Endothelial cell of umbilical vein (primary cell): ENCODE measurements at regions of chr3 and their contacts with region 1.

Region 1: DNA sequence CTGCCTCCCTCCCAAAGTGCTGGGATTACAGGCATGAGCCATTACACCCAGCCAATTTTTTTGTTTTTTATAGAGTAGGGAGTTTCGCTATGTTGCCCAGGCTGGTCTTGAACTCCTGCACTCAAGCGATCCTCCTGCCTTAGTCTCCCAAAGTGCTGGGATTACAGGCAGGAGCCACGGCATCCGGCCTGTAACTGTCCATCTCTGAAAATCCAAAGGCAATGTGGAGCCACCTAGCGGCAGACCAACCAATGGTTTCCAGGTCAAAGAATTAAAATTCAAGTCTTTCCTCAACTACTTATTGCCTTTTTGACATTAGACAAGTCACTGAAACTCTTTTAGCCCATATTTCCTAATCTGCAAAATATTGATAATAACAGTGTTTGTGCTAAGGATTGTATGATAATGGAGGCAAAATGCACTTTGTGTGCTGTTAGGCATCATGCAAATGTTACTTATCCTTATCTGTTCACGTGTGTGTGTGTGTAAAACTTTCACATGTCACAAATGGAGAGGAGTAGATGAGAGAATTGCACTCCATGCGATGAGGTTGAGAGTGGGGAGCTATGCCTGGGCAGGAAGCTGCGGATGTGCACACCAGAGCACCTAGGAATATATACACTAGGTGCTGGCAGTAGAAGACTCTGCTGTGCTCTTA is 48.7 kb downstream of the COL8A1 start:
- DNase-seq: peak; percentile 71
- H3K4me3 ChIP-seq: no peak overlapping the region
- H3K27ac ChIP-seq: no peak overlapping the region
- H3K4me1 ChIP-seq: peaks cover 11% of the 10 kb centered on the region
- H3K27me3 ChIP-seq: no peaks in the 10 kb centered on the region
- CTCF ChIP-seq: peak; percentile 54 to 55
- POLR2A ChIP-seq: peak; percentile 4

Region 2: DNA sequence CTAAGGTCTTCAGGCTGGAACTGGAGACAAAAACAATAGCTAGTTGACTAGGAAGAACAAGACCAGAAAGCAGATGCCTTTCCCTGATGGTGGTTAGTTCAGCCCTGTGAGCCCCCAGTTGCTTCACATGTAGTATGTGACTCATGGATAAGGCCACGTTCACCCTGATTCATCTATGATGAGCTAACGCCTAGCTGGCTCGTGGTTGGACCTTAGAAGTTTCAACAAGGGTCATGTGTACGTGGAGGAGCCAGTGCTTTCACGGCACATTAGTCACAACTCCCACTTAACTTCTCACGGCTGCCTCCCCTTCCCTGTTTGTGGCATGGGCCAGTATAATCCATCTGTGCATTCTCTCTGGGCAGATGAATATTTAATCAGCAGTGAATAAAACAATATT is 28.1 kb before region 1 on chr3:
- CTCF ChIA-PET with region 1: interaction called, 4 read pairs
- POLR2A ChIA-PET with region 1: no interaction called
- dilution Hi-C with region 1: no loop called
- intact Hi-C with region 1: loop called (anchors 2 kb)
- DNase-seq: peak; percentile 91
- H3K4me3 ChIP-seq: no peak overlapping the region
- H3K27ac ChIP-seq: peak overlapping the region; percentile 98
- H3K4me1 ChIP-seq: peaks cover 32% of the 10 kb centered on the region
- H3K27me3 ChIP-seq: no peaks in the 10 kb centered on the region
- CTCF ChIP-seq: no peak
- POLR2A ChIP-seq: peak; percentile 72

Region 3: DNA sequence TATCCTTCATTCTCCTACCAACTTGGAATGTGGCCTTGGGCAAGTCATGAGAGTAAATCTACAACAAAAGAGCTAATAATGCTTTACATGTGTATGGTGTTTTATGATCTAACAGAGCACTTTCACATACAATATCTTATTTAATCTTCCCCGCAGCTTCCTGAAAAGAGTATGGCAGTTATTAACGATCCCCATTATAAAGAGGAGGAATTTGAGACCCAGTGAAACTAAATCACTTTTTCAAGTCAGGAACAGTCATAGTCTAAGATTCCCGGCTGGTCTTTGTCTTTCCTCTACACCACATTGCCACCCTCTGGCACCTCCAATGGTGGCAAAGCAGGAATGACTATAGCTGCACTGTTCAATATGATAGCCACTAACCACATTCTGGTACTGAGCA is 60.8 kb after region 1 on chr3:
- CTCF ChIA-PET with region 1: interaction called, 7 read pairs
- POLR2A ChIA-PET with region 1: no interaction called
- dilution Hi-C with region 1: no loop called
- intact Hi-C with region 1: loop called (anchors 2 kb)
- DNase-seq: peak; percentile 62
- H3K4me3 ChIP-seq: no peak overlapping the region
- H3K27ac ChIP-seq: peak overlapping the region; percentile 12
- H3K4me1 ChIP-seq: peaks cover 24% of the 10 kb centered on the region
- H3K27me3 ChIP-seq: no peaks in the 10 kb centered on the region
- CTCF ChIP-seq: peak; percentile 23 to 27
- POLR2A ChIP-seq: no peak